Left colon (tissue), 2 donors: ENCODE measurements at regions of chr15 and their contacts with region 1.

Region 1: GRCh38 chr15:68924866-68925560 is 5.3 kb upstream of the SPESP1 start:
- DNase-seq: peak; percentile 42 to 76
- ATAC-seq: peak; percentile 82

Region 2: GRCh38 chr15:68550481-68551295 is 374.3 kb before region 1 on chr15:
- intact Hi-C with region 1: loop called in 1 of 2 experiments (anchors 5 kb)
- DNase-seq: peak in 1 of 2 donors; percentile 83
- ATAC-seq: peak; percentile 54